Panc1 (cell line): ENCODE measurements at regions of chr3 and their contacts with region 1.

Region 1: DNA sequence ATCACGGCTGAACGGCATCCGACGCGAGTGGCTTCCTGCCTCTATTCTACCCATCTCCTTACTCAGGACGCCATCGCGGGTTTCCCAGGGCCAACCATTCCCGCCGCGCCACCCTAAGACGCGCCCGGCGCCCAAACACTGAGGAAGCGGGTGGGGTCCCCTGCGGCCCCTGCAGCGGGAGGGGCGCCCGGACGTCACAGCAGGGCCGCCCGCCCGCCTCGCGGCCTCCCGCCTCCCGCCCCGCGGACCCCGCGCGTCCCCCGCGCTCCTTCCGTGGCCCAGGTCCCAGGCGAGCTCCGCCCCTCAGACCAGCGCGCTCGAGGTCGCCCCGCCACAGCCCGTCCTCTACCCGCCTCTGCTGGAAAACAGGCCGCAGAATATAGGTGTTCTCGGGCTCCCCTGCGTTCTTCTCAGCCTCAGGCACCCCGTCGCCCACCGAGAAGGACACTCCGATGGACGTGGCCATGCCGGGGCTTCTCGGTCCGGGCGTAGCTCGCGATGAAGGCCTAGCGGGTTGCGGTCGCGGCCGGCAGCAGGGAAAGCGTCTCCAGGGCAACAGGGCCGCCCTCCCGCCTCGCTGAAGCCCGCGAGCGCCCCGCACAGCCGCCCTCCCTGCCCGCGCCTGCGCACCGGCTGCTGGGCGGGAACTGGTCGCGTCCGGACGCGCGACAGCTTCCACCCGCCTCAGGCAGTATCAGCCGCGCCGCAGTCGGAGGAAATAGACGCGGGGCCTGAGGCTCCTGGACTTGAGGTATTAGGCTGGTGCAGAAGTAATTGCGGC is at the start of gene DYNLT2B:
- DNase-seq: peak; percentile 62
- ATAC-seq: peak; percentile 96
- H3K4me3 ChIP-seq: peak within 1 kb of the TSS; percentile 66 to 83
- H3K27ac ChIP-seq: peak within 1 kb of the TSS; percentile 78
- H3K4me1 ChIP-seq: no peaks in the 10 kb centered on the region
- H3K27me3 ChIP-seq: no peaks in the 10 kb centered on the region
- CTCF ChIP-seq: no peak
- total RNA-seq, gene DYNLT2B: 41.4 TPM

Region 2: DNA sequence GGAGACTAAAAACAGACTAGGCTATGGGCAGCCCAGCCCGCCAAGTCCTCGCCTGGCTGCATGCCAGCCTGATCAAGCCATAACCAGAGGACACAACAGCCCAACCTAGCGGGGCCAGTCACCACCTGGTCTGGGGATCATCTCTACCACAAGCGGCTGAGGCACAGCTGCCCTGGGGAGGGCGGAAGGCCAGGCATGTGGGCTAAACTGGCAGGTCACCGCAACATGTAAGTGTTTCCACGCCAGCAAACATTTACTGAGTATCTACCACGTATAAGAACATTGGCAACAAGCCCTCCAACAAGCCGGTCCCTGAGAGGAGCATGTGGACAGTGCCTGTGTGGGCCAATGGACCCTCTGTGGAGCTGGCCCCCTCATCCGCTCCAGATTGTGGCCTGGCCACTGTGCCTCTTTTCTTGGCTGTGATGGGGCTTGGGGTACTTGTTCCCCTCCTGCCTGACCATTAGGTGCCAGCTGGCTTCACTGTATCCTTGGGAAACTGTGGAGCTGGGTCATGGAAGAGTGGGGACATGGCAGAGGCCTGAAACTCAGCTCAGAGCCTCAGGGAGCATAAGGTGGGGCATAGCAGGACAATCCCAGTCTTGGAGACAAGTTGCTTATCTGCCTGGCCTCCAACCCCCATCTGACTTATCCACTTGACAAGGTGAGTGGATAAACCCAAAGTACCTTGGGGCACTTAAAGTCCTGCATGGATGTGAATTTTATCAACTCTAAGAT is 105.3 kb after region 1 on chr3:
- CTCF ChIA-PET with region 1: no interaction called
- POLR2A ChIA-PET with region 1: interaction called, 15 read pairs
- in situ Hi-C with region 1: no loop called
- intact Hi-C with region 1: no loop called
- DNase-seq: no peak
- ATAC-seq: peak; percentile 44; the same call in 1 of the 2 replicates
- H3K4me3 ChIP-seq: no peak overlapping the region
- H3K27ac ChIP-seq: no peak overlapping the region
- H3K4me1 ChIP-seq: no peaks in the 10 kb centered on the region; the same call in 1 of the 2 replicates
- H3K27me3 ChIP-seq: no peaks in the 10 kb centered on the region
- CTCF ChIP-seq: no peak

Region 3: DNA sequence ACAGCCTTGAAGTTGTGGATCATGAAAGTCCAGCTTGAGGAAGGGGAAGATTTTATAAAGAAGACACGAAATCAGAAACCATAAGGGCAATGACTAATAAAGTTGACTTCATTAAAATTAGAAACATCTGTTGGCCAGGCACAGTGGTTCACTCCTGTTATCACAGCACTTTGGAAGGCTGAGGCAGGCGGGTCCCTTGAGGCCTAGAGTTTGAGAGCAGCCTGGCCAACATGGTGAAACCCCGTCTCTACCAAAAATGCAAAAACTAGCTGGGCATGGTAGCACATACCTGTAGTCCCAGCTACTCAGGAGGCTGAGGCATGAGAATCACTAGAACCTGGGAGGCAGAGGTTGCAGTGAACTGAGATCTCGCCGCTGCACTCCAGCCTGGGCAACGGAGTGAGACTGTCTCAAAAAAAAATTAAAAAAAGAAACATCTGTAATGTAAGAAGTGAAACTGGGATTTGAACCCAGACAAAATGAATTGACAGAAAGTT is 122.2 kb after region 1 on chr3:
- CTCF ChIA-PET with region 1: no interaction called
- POLR2A ChIA-PET with region 1: interaction called, 22 read pairs
- in situ Hi-C with region 1: no loop called
- intact Hi-C with region 1: no loop called
- DNase-seq: no peak
- ATAC-seq: no peak
- H3K4me3 ChIP-seq: no peak overlapping the region
- H3K27ac ChIP-seq: no peak overlapping the region
- H3K4me1 ChIP-seq: no peaks in the 10 kb centered on the region
- H3K27me3 ChIP-seq: no peaks in the 10 kb centered on the region
- CTCF ChIP-seq: no peak